ENCODE measurements at regions of chr19 and their contacts with region 1.

Region 1: GRCh38 chr19:18898081-18898606 is 2.2 kb upstream of the CERS1 start:
- DNase-seq: no peak
- H3K4me3 ChIP-seq: no peak overlapping the region
- H3K27ac ChIP-seq: no peak overlapping the region
- H3K4me1 ChIP-seq: peaks cover 10% of the 10 kb centered on the region
- H3K27me3 ChIP-seq: no peaks in the 10 kb centered on the region
- CTCF ChIP-seq: no peak

Region 2: DNA sequence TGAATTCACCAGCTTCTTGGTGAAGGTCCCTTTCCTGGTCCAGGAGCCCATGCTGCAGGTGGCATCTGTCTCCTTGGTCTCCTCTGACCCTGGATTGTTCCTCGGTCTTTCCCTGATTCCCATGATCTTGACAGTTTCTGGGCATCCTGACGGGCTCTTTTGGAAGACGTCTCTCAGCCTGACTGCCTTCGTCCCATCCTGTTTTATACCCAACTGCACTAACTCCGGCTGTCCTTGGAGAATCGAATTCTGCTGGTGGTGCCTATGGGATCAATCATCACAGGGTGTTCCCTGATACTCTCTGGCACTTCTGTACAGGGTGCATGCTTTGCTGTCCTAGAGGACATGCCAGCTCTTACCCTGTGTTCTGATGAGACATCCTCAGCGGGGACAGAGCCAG is 21.3 kb before region 1 on chr19:
- CTCF ChIA-PET with region 1: interaction called, 21 read pairs
- POLR2A ChIA-PET with region 1: no interaction called
- intact Hi-C with region 1: no loop called
- DNase-seq: no peak
- H3K4me3 ChIP-seq: no peak overlapping the region
- H3K27ac ChIP-seq: no peak overlapping the region
- H3K4me1 ChIP-seq: no peaks in the 10 kb centered on the region
- H3K27me3 ChIP-seq: no peaks in the 10 kb centered on the region
- CTCF ChIP-seq: no peak

Measured in A673 (cell line).